ENCODE measurements at regions of chr13 and their contacts with region 1.

Region 1: GRCh38 chr13:29354377-29354776 is 241.1 kb downstream of the SLC7A1 start:
- DNase-seq: no peak
- H3K4me3 ChIP-seq: no peak overlapping the region
- H3K27ac ChIP-seq: no peak overlapping the region
- H3K27me3 ChIP-seq: no peaks in the 10 kb centered on the region
- CTCF ChIP-seq: no peak

Region 2: GRCh38 chr13:29210676-29211075 is 143.7 kb before region 1 on chr13:
- intact Hi-C with region 1: loop called in 1 of 2 experiments (anchors 5 kb)
- DNase-seq: no peak
- H3K4me3 ChIP-seq: no peak overlapping the region
- H3K27ac ChIP-seq: no peak overlapping the region
- H3K27me3 ChIP-seq: no peaks in the 10 kb centered on the region
- CTCF ChIP-seq: no peak

Region 3: DNA sequence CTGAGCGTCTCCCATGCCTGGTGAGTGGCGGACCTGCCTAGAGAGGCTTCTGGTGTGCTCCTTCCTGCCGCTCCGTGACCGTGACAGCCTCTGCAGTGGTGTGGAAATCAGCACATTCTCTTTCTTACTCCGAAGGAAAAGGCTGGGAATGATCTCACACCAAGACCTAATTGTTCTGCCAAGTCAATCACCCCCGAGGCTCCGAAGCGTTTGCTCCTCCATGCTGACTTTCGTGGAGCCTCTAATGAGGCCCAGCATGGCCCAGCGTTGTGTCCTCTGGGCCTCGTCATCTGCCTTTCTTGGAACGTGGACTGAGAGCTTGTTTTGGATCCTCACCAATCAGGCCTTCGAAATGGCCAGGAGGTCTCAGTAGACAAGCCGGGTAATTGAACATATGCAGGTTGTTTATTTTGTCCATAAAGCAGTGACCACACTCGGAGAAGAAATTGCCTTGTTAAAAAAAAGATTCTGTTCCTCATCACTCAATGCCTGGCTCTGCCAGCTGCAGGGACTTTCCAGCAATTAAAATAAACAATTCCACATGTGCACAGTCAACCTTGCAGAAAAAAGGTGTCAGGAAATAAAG is 388.9 kb after region 1 on chr13:
- intact Hi-C with region 1: no loop called
- DNase-seq: no peak
- H3K4me3 ChIP-seq: no peak overlapping the region
- H3K27ac ChIP-seq: no peak overlapping the region
- H3K27me3 ChIP-seq: no peaks in the 10 kb centered on the region
- CTCF ChIP-seq: no peak